Mucosa of descending colon (tissue), 3 donors: ENCODE measurements at regions of chr13 and their contacts with region 1.

Region 1: DNA sequence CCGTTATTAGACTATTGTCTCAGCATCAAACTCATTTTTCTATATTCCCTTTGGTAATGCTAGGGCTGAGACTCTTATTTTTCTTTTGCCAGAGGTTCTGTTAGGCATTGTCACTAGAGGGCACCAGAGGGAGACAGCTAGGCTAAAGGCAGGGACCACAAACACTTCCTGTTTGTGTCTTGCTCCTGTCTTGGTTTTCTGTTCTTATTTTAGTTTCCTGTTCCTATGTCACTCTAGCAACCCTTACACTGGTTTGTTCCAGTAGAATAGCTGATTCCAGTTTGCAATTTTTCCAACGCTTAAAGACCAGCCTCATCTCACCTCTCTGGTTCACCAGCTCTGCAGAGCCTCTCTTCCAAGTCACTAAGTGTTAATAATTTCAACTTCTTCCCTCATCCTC is 772.0 kb downstream of the DIAPH3 start:
- DNase-seq: peak in 1 of 3 donors; percentile 85
- ATAC-seq: peak; percentile 90
- H3K4me3 ChIP-seq: no peak overlapping the region
- H3K4me1 ChIP-seq: no peaks in the 10 kb centered on the region
- CTCF ChIP-seq: peak; percentile 71

Region 2: GRCh38 chr13:59666504-59666903 is 274.8 kb after region 1 on chr13:
- intact Hi-C with region 1: loop called in 1 of 2 experiments (anchors 10 kb)
- DNase-seq: no peak
- ATAC-seq: no peak
- H3K4me3 ChIP-seq: no peak overlapping the region
- H3K4me1 ChIP-seq: no peaks in the 10 kb centered on the region
- CTCF ChIP-seq: no peak

Region 3: DNA sequence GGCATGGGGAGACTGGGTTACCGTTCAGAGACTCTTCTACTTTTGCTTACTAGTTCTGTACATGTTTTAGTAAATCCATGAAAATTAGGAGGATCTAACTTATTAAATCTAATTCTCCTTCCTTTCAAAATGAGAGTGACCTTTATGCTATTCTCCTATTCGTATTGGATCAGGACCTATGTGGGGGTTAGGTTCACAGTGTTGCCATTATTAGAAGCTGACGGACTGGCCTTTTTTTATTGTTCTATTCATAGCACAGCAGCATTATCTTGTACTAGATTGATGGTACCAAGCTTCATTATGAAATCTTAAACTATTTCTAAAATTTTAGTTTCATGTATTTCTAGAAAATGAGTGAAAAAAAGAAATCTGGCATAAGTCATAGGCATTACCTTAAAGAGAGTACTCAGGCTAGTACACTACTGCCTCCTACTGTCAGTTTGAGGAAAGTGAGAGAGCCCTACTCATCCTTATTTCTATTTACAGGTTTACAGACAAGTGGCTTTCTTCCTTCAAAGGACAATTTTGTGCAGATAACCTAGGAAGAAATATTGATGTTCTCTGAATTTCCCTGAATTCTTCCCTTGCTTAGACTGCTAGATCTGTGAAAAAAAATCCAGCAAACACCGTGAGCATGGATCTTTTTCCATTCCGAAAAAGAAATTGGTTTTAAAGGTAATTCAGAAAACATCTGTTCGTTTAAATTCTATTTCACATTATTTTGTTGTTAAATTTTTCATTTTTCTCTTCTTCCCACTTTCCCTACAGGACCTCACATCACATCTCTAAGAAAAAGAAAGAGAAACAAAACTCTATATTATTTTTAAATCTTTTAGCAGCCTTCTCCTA is 286.5 kb after region 1 on chr13:
- intact Hi-C with region 1: loop called in 1 of 2 experiments (anchors 5 kb)
- DNase-seq: peak in 1 of 3 donors; percentile 38
- ATAC-seq: peak; percentile 67
- H3K4me3 ChIP-seq: no peak overlapping the region
- H3K4me1 ChIP-seq: no peaks in the 10 kb centered on the region
- CTCF ChIP-seq: peak; percentile 42

Region 4: DNA sequence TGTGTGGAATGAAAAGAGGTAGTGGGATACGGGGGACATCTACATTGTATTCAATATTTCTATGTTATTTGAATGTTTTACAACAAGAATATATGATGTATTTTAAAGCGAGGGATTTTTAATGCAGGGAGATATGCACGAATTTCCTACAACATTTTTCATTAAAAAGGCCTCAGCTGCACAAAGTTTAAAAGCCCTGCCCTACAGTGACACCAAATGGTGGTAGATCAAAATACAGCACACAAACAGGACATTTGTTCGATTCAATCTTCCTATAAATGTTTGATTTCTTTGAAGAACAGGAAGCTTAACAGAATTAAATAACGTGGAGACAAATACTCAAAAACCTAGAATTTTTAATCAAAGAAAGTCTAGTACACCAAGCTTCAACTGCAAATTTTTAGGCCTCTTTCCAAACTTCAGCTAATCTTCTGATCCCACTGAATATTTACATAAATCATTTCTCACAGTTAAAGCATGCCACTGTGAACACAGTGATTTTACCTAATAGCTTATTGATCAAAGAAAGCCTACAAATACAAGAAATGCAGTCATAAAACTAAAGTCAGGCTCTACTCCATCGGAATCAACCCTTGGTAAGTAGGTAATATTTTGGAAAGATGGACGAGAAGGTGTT is 514.8 kb after region 1 on chr13:
- intact Hi-C with region 1: loop called in 1 of 2 experiments (anchors 10 kb)
- DNase-seq: peak in 1 of 3 donors; percentile 19
- ATAC-seq: peak; percentile 45
- H3K4me3 ChIP-seq: no peak overlapping the region
- H3K4me1 ChIP-seq: no peaks in the 10 kb centered on the region
- CTCF ChIP-seq: no peak